Activated CD4-positive, alpha-beta T cell treated with anti-CD3 and anti-CD28 coated beads for 36 hours (primary cell): ENCODE measurements at regions of chr15 and their contacts with region 1.

Region 1: GRCh38 chr15:63466378-63467192 is 37.8 kb upstream of the USP3 start:
- DNase-seq: peak; percentile 62
- ATAC-seq: peak; percentile 78
- H3K4me3 Mint-ChIP-seq: no peak overlapping the region
- H3K27ac Mint-ChIP-seq: no peak overlapping the region
- H3K4me1 Mint-ChIP-seq: peaks cover 26% of the 10 kb centered on the region
- H3K27me3 Mint-ChIP-seq: no peaks in the 10 kb centered on the region

Region 2: DNA sequence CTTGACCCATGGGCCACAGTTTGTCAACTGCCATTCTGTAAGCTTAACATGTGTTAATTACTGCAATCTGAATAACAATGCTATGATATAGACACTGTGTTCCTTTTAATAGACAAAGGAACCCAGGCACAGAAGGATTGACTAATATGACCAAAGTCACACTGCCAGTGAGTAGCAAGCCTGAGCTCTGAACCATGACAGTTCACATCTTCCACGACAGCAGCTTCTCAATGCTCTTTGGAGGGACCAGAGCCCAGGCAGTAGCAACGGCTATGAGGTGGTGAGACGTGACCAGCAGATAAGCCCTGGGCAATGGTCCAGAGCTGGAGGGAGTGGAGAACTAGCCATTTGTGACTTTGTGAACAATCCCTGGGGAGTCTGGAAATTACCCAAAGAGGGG is 104.4 kb before region 1 on chr15:
- CTCF ChIA-PET with region 1: no interaction called
- POLR2A ChIA-PET with region 1: no interaction called
- intact Hi-C with region 1: no loop called
- DNase-seq: no peak
- ATAC-seq: no peak
- H3K4me3 Mint-ChIP-seq: no peak overlapping the region
- H3K27ac Mint-ChIP-seq: no peak overlapping the region
- H3K4me1 Mint-ChIP-seq: no peaks in the 10 kb centered on the region
- H3K27me3 Mint-ChIP-seq: peaks cover 4% of the 10 kb centered on the region

Region 3: DNA sequence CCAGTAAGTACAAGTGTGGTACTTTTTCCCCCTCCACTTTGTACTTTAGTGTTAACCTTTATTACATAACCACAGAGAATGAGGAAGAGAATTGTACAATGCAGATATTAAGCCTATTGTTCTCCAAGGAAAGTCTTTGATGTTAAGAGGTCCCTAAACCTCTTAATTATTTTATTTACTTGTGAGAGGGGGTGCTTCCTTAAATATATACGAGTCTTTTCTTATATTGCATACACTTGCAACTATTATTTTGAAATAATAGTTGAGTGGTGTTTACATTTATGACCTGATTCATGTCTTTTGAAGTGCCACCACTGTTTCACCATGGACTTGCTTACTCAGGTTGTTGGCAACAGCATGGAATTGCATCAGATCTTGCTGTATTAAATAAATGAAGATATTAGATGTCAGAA is 48.0 kb after region 1 on chr15:
- CTCF ChIA-PET with region 1: interaction called, 12 read pairs
- POLR2A ChIA-PET with region 1: interaction called, 5 read pairs
- intact Hi-C with region 1: no loop called
- DNase-seq: no peak
- ATAC-seq: no peak
- H3K4me3 Mint-ChIP-seq: peak overlapping the region; percentile 42
- H3K27ac Mint-ChIP-seq: peak overlapping the region; percentile 64
- H3K4me1 Mint-ChIP-seq: peaks cover 91% of the 10 kb centered on the region
- H3K27me3 Mint-ChIP-seq: no peaks in the 10 kb centered on the region

Region 4: GRCh38 chr15:63553388-63553791 is 86.8 kb after region 1 on chr15:
- CTCF ChIA-PET with region 1: interaction called, 10 read pairs
- POLR2A ChIA-PET with region 1: no interaction called
- intact Hi-C with region 1: no loop called
- DNase-seq: peak; percentile 30
- ATAC-seq: peak; percentile 72
- H3K4me3 Mint-ChIP-seq: peak overlapping the region; percentile 35
- H3K27ac Mint-ChIP-seq: peak overlapping the region; percentile 51
- H3K4me1 Mint-ChIP-seq: peaks cover 50% of the 10 kb centered on the region
- H3K27me3 Mint-ChIP-seq: no peaks in the 10 kb centered on the region

Region 5: DNA sequence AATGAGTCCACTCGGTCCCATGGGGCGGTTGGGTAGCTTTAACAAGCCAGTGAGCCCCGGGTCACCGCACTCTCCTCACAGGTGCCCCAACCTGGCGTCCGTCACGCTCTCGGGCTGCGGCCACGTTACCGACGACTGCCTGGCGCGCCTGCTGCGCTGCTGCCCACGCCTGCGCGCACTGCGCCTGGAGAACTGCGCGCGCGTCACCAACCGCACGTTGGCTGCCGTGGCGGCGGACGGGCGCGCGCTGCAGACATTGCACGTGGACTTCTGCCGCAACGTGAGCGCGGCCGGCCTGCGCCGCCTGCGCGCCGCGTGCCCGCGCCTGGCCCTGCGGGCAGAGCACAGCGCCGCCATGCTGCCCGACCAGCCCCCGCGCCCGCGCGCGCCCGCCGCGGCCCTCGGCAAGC is 134.0 kb after region 1 on chr15:
- CTCF ChIA-PET with region 1: interaction called, 19 read pairs
- POLR2A ChIA-PET with region 1: no interaction called
- intact Hi-C with region 1: loop called (anchors 1 kb)
- DNase-seq: peak; percentile 95
- ATAC-seq: peak; percentile 74
- H3K4me3 Mint-ChIP-seq: peak overlapping the region; percentile 88
- H3K27ac Mint-ChIP-seq: peak overlapping the region; percentile 96
- H3K4me1 Mint-ChIP-seq: peaks cover 54% of the 10 kb centered on the region
- H3K27me3 Mint-ChIP-seq: no peaks in the 10 kb centered on the region

Region 6: DNA sequence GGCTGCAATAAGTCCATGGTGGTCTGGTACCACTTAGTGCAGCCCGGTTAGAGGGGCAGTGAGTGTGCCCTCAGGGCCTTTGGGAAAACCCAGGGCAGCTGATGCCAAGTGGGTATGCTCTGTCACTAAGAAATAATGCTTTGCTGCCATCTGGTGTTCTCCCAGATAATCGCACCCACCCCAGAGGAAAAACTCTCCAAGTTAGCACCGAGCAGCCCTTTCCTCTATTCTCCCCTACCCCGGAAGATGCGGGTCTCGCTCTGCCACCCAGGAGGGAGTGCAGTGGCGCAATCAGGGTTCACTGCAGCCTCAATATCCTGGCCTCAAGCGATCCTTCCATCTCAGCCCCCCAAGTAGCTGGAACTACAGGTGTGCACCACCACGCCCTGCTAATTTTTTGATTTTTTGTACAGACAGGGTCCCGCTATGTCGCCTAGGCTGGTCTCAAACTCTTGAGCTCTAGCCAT is 601.0 kb after region 1 on chr15:
- CTCF ChIA-PET with region 1: interaction called, 6 read pairs
- POLR2A ChIA-PET with region 1: no interaction called
- intact Hi-C with region 1: loop called (anchors 1 to 10 kb)
- DNase-seq: peak; percentile 78
- ATAC-seq: peak; percentile 86
- H3K4me3 Mint-ChIP-seq: no peak overlapping the region
- H3K27ac Mint-ChIP-seq: no peak overlapping the region
- H3K4me1 Mint-ChIP-seq: peaks cover 6% of the 10 kb centered on the region
- H3K27me3 Mint-ChIP-seq: no peaks in the 10 kb centered on the region